ENCODE measurements at regions of chr6 and their contacts with region 1.

Region 1: DNA sequence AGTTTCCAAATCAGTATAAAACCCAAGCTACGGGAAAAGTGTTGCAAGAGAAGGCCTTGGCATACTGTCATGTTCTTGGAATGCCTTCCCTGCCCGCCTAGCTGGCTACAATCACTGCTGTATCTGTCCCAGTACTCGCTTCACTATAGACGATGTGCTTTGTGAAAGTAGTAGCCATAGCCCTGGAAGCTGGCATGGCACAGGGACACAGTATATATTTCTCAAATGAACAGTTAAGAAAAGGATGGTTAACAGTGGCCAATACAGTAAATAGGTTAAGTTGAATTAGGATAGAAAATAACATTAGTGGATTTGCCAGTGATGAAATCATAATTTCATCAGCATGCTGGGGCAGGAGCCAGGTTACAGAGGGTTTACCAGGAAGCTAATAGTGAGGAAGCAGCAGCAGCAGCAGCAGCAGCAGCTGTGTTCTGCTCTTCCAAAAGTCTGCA is 499.3 kb downstream of the CDKAL1 start:
- DNase-seq: peak; percentile 90
- H3K4me3 Mint-ChIP-seq: peak overlapping the region; percentile 49
- H3K27ac Mint-ChIP-seq: peak overlapping the region; percentile 72
- H3K4me1 Mint-ChIP-seq: peaks cover 16% of the 10 kb centered on the region
- H3K27me3 Mint-ChIP-seq: no peaks in the 10 kb centered on the region
- CTCF ChIP-seq: no peak

Region 2: GRCh38 chr6:21022343-21023107 is 11.1 kb before region 1 on chr6:
- CTCF ChIA-PET with region 1: interaction called, 3 read pairs
- POLR2A ChIA-PET with region 1: interaction called, 16 read pairs
- intact Hi-C with region 1: no loop called
- DNase-seq: peak; percentile 69
- H3K4me3 Mint-ChIP-seq: peak overlapping the region; percentile 43
- H3K27ac Mint-ChIP-seq: peak overlapping the region; percentile 96
- H3K4me1 Mint-ChIP-seq: peaks cover 32% of the 10 kb centered on the region
- H3K27me3 Mint-ChIP-seq: no peaks in the 10 kb centered on the region
- CTCF ChIP-seq: no peak

Region 3: GRCh38 chr6:21263531-21264287 is 230.1 kb after region 1 on chr6:
- CTCF ChIA-PET with region 1: no interaction called
- POLR2A ChIA-PET with region 1: no interaction called
- intact Hi-C with region 1: loop called (anchors 5 kb)
- DNase-seq: peak; percentile 89
- H3K4me3 Mint-ChIP-seq: no peak overlapping the region
- H3K27ac Mint-ChIP-seq: peak overlapping the region; percentile 79
- H3K4me1 Mint-ChIP-seq: peaks cover 15% of the 10 kb centered on the region
- H3K27me3 Mint-ChIP-seq: no peaks in the 10 kb centered on the region
- CTCF ChIP-seq: no peak

Region 4: GRCh38 chr6:21414065-21414464 is 380.5 kb after region 1 on chr6:
- CTCF ChIA-PET with region 1: no interaction called
- POLR2A ChIA-PET with region 1: no interaction called
- intact Hi-C with region 1: no loop called
- DNase-seq: no peak
- H3K4me3 Mint-ChIP-seq: no peak overlapping the region
- H3K27ac Mint-ChIP-seq: no peak overlapping the region
- H3K4me1 Mint-ChIP-seq: no peaks in the 10 kb centered on the region
- H3K27me3 Mint-ChIP-seq: no peaks in the 10 kb centered on the region
- CTCF ChIP-seq: no peak

Measured in MCF 10A (cell line).